Psoas muscle (tissue), 8 donors: ENCODE measurements at regions of chr7 and their contacts with region 1.

Region 1: DNA sequence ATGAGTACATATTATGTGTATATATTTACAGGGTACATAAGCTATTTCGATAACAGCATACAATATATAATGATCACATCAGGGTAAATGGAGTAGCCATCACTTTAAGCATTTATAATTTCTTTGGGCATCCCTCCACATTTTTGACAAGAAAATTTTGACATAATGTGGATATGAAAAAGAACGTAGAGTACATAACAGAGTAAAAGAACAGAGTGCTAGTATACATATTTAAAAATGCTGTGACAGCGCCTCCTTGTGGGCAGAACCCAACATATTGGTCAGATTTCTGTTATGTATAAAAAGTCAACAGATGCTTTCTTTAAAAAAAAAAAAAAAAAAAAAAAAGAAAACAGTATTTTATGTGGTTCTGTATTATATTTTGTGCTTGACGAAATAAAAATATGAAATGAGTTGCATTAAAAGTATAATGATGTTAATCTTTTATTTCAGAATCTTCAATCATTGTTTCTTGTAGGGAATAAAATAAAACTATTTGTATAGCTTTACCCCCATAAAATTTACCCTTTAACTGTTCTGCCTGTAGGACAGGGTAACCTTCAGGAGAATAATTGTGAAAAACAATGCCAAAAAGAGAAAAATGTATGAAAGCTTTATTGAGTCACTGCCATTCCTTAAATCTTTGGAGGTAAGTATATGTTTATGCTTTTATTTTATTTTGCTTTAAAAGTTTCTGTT is 18.3 kb upstream of the HBP1 start:
- DNase-seq: peak; percentile 66 to 73
- ATAC-seq: peak in 3 of 4 donors; percentile 57 to 71 (median 70)
- H3K4me3 ChIP-seq: no peak overlapping the region
- H3K27ac ChIP-seq: no peak overlapping the region
- H3K4me1 ChIP-seq: peaks cover 8% of the 10 kb centered on the region
- H3K27me3 ChIP-seq: no peaks in the 10 kb centered on the region
- CTCF ChIP-seq: peak; percentile 65

Region 2: DNA sequence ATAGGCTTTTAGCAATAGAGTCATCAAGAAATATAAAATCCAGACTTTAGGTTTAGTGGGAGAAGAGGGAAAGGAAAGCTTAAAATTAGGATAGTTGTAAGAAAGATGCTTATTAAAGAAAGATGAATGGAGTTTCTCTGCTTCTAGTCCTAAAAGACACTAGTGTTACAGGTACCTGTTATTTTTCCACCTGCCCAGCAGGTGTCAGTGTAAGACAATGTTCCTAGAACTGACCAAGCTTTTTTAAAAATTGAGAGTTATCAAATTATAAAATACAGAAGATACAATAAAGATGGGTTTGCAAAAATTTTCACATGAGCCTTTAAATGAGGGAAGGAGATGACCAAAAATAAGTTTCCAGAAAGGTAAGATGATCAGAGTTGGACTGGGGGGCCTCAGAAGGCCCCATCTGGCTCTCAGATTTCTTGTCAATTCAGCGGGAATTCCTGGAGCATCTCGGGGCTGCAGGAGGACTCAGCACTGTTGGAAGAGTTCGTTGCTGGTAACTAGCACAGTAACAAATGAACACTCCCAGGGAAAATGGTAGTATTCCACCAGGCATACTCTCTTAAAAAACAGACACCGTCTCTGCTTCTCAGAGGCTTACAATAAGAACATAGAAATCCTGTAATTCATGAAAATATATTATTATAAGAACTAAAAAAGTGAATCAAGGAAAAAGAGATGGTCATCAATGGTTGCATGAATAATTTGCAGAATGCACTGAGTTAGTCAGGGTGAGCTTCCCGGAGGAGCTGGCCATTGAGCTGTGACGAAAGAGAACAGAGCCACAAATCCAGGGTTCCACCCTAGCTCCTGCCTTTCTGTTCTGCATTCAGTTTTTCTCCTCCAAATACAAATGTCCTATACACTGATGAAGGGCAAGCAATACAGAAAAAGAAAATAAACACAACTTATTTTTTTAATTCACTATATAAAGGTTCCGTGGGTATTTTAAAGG is 357.2 kb before region 1 on chr7:
- intact Hi-C with region 1: loop called (anchors 5 kb)
- DNase-seq: no peak
- ATAC-seq: peak in 1 of 4 donors; percentile 59
- H3K4me3 ChIP-seq: no peak overlapping the region
- H3K27ac ChIP-seq: no peak overlapping the region
- H3K4me1 ChIP-seq: no peaks in the 10 kb centered on the region
- H3K27me3 ChIP-seq: no peaks in the 10 kb centered on the region
- CTCF ChIP-seq: peak; percentile 61

Region 3: GRCh38 chr7:106947244-106947728 is 203.2 kb before region 1 on chr7:
- intact Hi-C with region 1: loop called in 1 of 2 experiments (anchors 5 kb)
- DNase-seq: no peak
- ATAC-seq: no peak
- H3K4me3 ChIP-seq: no peak overlapping the region
- H3K27ac ChIP-seq: no peak overlapping the region
- H3K4me1 ChIP-seq: no peaks in the 10 kb centered on the region
- H3K27me3 ChIP-seq: peaks cover under 1 to 5% (median 3%) of the 10 kb centered on the region in 3 donors
- CTCF ChIP-seq: peak; percentile 48

Region 4: GRCh38 chr7:107118112-107118900 is 32.2 kb before region 1 on chr7:
- intact Hi-C with region 1: no loop called
- DNase-seq: no peak
- ATAC-seq: no peak
- H3K4me3 ChIP-seq: no peak overlapping the region
- H3K27ac ChIP-seq: no peak overlapping the region
- H3K4me1 ChIP-seq: no peaks in the 10 kb centered on the region
- H3K27me3 ChIP-seq: no peaks in the 10 kb centered on the region
- CTCF ChIP-seq: no peak

Region 5: DNA sequence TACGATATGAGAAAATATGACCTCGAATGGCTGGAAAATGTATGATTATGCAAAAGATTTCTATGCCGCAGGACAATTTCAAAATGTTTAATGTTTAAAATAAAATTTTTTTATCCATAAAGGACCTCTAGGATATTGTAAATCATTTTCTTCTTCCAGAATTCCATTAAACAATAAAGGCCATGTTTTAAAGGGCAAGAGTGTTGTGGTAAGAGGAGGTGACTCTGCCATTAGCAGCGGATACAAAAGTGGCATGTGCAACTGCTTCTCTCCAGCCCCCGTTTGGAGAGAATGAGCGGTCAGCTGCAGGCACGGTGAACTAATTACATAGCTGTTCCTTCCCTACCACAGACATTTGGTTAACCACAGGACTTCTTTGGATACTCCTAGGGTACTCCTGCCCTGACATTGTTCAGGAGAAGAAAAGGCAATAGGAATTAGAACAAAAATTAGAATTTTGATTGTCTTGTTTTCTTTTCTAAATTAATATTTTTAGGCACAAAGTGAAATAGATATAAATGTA is 82.1 kb after region 1 on chr7:
- intact Hi-C with region 1: no loop called
- DNase-seq: no peak
- ATAC-seq: peak in 3 of 4 donors; percentile 53 to 61 (median 55)
- H3K4me3 ChIP-seq: no peak overlapping the region
- H3K27ac ChIP-seq: no peak overlapping the region
- H3K4me1 ChIP-seq: peaks cover 10% of the 10 kb centered on the region
- H3K27me3 ChIP-seq: no peaks in the 10 kb centered on the region
- CTCF ChIP-seq: no peak